Heart left ventricle (tissue), 16 donors: ENCODE measurements at regions of chr14 and their contacts with region 1.

Region 1: GRCh38 chr14:64303471-64303917 is 9.3 kb upstream of the ESR2 start:
- DNase-seq: no peak
- ATAC-seq: peak; percentile 42 to 60 (median 53)
- H3K4me3 ChIP-seq: no peak overlapping the region
- H3K27ac ChIP-seq: no peak overlapping the region
- H3K4me1 ChIP-seq: no peaks in the 10 kb centered on the region
- H3K27me3 ChIP-seq: no peaks in the 10 kb centered on the region
- CTCF ChIP-seq: peak; percentile 64 to 87 (median 81)
- POLR2A ChIP-seq: no peak

Region 2: DNA sequence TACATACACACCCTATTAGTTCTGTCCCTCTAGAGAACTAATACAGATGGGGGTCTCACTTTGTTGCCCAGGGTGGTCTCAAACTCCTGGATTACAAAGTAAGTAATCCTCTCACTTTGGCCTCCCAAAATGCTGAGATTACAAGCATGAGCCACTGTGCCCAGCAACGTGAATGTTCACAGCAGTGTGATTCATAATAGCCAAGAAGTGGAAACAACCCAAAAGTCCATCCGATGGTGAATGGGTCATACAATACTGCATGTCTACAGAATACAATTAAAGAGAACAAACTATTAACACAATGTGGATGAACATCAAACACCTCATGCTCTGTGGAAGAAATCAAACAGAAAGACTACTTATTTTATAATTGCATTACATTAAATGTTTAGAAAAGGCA is 508.0 kb before region 1 on chr14:
- intact Hi-C with region 1: loop called in 8 of 10 experiments (anchors 5 to 10 kb)
- DNase-seq: no peak
- ATAC-seq: no peak
- H3K4me3 ChIP-seq: no peak overlapping the region
- H3K27ac ChIP-seq: no peak overlapping the region
- H3K4me1 ChIP-seq: peaks cover 0 to 9% (median 0%) of the 10 kb centered on the region in 12 donors
- H3K27me3 ChIP-seq: no peaks in the 10 kb centered on the region
- CTCF ChIP-seq: no peak
- POLR2A ChIP-seq: no peak

Region 3: GRCh38 chr14:63800651-63801375 is 502.7 kb before region 1 on chr14:
- intact Hi-C with region 1: loop called in 8 of 10 experiments (anchors 5 to 10 kb)
- DNase-seq: no peak
- ATAC-seq: no peak
- H3K4me3 ChIP-seq: no peak overlapping the region
- H3K27ac ChIP-seq: no peak overlapping the region
- H3K4me1 ChIP-seq: peaks cover 0 to 9% (median 0%) of the 10 kb centered on the region in 12 donors
- H3K27me3 ChIP-seq: no peaks in the 10 kb centered on the region
- CTCF ChIP-seq: no peak
- POLR2A ChIP-seq: no peak

Region 4: GRCh38 chr14:64005822-64006221 is 297.7 kb before region 1 on chr14:
- intact Hi-C with region 1: loop called in 1 of 10 experiments (anchors 10 kb)
- DNase-seq: no peak
- ATAC-seq: no peak
- H3K4me3 ChIP-seq: no peak overlapping the region
- H3K27ac ChIP-seq: no peak overlapping the region
- H3K4me1 ChIP-seq: no peaks in the 10 kb centered on the region
- H3K27me3 ChIP-seq: no peaks in the 10 kb centered on the region
- CTCF ChIP-seq: no peak
- POLR2A ChIP-seq: no peak

Region 5: GRCh38 chr14:64040044-64040443 is 263.4 kb before region 1 on chr14:
- intact Hi-C with region 1: loop called in 4 of 10 experiments (anchors 2 to 10 kb)
- DNase-seq: no peak
- ATAC-seq: no peak
- H3K4me3 ChIP-seq: no peak overlapping the region
- H3K27ac ChIP-seq: no peak overlapping the region
- H3K4me1 ChIP-seq: peaks cover 0 to 6% (median 0%) of the 10 kb centered on the region in 12 donors
- H3K27me3 ChIP-seq: no peaks in the 10 kb centered on the region
- CTCF ChIP-seq: peak in 6 of 12 donors; percentile 10 to 34 (median 30)
- POLR2A ChIP-seq: no peak

Region 6: DNA sequence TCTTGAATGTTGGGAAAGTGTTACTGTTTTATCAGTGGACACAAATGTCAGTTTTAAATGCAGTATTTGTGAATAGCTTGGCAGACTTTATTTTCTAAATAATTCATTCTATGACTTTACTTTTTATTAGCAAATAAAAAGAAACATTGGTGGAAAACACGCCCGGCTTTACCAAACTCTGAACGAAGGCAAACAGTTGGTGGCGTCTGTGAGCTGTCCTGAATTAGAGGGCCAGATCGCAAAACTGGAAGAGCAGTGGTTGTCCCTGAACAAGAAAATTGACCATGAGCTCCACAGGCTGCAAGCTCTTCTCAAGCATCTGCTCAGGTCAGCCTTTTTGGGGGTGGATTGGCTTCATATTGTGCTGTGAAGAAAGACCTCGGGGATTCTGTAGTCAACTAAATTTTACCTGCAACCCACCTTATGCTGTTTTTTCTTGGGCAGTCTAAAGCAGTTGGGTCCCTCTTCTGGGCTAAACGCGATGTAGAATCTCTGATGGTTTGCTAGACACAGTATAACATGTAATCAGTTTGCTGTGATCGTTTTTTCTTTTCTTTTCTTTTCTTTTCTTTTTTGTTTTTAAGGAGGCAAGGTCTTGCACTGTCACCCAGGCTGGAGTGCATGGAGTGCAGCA is 165.7 kb before region 1 on chr14:
- intact Hi-C with region 1: loop called in 6 of 10 experiments (anchors 5 kb)
- DNase-seq: no peak
- ATAC-seq: peak in 1 of 4 donors; percentile 62
- H3K4me3 ChIP-seq: no peak overlapping the region
- H3K27ac ChIP-seq: no peak overlapping the region
- H3K4me1 ChIP-seq: no peaks in the 10 kb centered on the region
- H3K27me3 ChIP-seq: no peaks in the 10 kb centered on the region
- CTCF ChIP-seq: peak in 7 of 12 donors; percentile 23 to 49 (median 36)
- POLR2A ChIP-seq: no peak

Region 7: DNA sequence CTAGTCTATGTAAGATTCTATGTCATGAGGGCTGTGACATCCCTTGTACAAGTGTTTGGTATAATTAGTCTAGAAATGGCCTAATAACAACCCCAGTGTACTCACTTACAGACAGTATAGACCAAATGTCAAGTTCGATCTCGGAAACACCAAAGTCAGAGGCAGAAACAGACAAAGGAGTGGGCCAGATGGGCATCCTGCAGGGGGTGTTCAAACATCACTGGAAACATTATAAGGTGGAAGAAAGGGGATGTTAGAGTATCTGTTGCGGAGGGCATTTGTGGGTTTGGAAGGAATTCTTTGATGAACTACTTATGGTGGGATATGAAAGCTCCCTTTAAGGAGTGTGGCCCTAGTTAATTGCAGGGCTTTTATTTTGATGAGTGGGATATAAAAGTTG is 143.9 kb before region 1 on chr14:
- intact Hi-C with region 1: loop called in 3 of 10 experiments (anchors 5 to 10 kb)
- DNase-seq: no peak
- ATAC-seq: no peak
- H3K4me3 ChIP-seq: no peak overlapping the region
- H3K27ac ChIP-seq: no peak overlapping the region
- H3K4me1 ChIP-seq: no peaks in the 10 kb centered on the region
- H3K27me3 ChIP-seq: no peaks in the 10 kb centered on the region
- CTCF ChIP-seq: peak in 8 of 12 donors; percentile 18 to 45 (median 24)
- POLR2A ChIP-seq: no peak